ENCODE measurements at regions of chr2 and their contacts with region 1.

Region 1: GRCh38 chr2:64750817-64751285 is 97.1 kb upstream of the SERTAD2 start:
- DNase-seq: peak; percentile 99
- H3K4me3 ChIP-seq: peak overlapping the region; percentile 54 to 92 (median 74)
- H3K27ac ChIP-seq: peak overlapping the region; percentile 92 to 98 (median 96)
- H3K4me1 ChIP-seq: peaks cover 12 to 29% (median 18%) of the 10 kb centered on the region in 4 donors
- H3K27me3 ChIP-seq: no peaks in the 10 kb centered on the region
- CTCF ChIP-seq: no peak
- EP300 ChIP-seq: no peak
- POLR2A ChIP-seq: peak; percentile 99

Region 2: GRCh38 chr2:64653349-64654062 is 97.3 kb before region 1 on chr2 and contains the start of gene SERTAD2:
- in situ Hi-C with region 1: loop called in 2 of 4 experiments (anchors 5 to 10 kb)
- intact Hi-C with region 1: loop called (anchors 5 kb)
- DNase-seq: peak; percentile 91
- H3K4me3 ChIP-seq: peak within 1 kb of the TSS; percentile 78 to 99 (median 90)
- H3K27ac ChIP-seq: peak within 1 kb of the TSS; percentile 98 to 100 (median 100)
- H3K4me1 ChIP-seq: peaks cover 33 to 51% (median 48%) of the 10 kb centered on the region in 4 donors
- H3K27me3 ChIP-seq: no peaks in the 10 kb centered on the region
- CTCF ChIP-seq: peak in 1 of 5 experiments; percentile 2
- EP300 ChIP-seq: no peak
- POLR2A ChIP-seq: peak; percentile 97
- total RNA-seq, gene SERTAD2: 5.4 to 22.1 (median 13.2) TPM

Region 3: DNA sequence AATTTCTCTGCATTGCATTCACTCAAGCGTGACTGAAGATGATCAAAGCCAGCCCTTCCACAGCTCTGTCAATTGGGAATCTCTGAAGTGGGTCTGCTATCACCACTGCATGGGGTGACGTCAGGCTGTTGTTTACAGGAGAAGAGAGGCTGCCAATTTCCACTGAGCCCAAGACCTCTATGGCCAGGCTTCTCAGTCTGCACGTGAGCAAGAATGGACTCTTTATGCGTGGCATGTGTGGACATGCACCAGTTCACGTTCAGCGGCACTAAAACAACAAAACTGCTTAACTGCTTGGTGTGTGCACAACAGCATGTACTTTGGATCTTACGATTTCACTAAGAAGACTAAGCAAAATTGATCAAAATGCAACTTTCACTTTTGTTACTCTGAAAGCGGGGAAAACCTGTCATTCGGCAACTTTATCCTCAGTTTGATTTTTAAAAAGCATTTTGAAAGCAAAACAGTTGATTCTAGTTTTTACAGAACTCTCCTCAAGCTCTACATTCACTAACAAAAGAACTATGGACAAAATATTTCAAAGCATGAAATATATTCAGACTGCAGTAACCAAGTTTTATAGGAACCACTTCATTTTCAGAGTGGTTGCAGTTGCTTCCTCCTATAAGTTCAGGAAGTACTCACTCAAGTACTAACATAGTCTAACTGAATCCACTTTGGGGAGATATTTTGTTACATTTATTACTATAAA is 20.1 kb before region 1 on chr2:
- in situ Hi-C with region 1: no loop called
- intact Hi-C with region 1: no loop called
- DNase-seq: peak; percentile 67
- H3K4me3 ChIP-seq: peak overlapping the region in 3 of 4 donors; percentile 19 to 40 (median 26)
- H3K27ac ChIP-seq: peak overlapping the region; percentile 75 to 86 (median 81)
- H3K4me1 ChIP-seq: peaks cover 14 to 56% (median 29%) of the 10 kb centered on the region in 4 donors
- H3K27me3 ChIP-seq: no peaks in the 10 kb centered on the region
- CTCF ChIP-seq: no peak
- EP300 ChIP-seq: no peak
- POLR2A ChIP-seq: peak; percentile 29

Region 4: GRCh38 chr2:64812285-64812684 is 61.4 kb after region 1 on chr2:
- in situ Hi-C with region 1: no loop called
- intact Hi-C with region 1: loop called (anchors 2 kb)
- DNase-seq: no peak
- H3K4me3 ChIP-seq: no peak overlapping the region
- H3K27ac ChIP-seq: no peak overlapping the region
- H3K4me1 ChIP-seq: no peaks in the 10 kb centered on the region
- H3K27me3 ChIP-seq: no peaks in the 10 kb centered on the region
- CTCF ChIP-seq: no peak
- EP300 ChIP-seq: no peak
- POLR2A ChIP-seq: no peak

Region 5: GRCh38 chr2:64839844-64840243 is 89.0 kb after region 1 on chr2:
- in situ Hi-C with region 1: loop called in 1 of 4 experiments (anchors 10 kb)
- intact Hi-C with region 1: no loop called
- DNase-seq: peak; percentile 21
- H3K4me3 ChIP-seq: no peak overlapping the region
- H3K27ac ChIP-seq: peak overlapping the region; percentile 3 to 77 (median 31)
- H3K4me1 ChIP-seq: peaks cover 9 to 33% (median 14%) of the 10 kb centered on the region in 4 donors
- H3K27me3 ChIP-seq: no peaks in the 10 kb centered on the region
- CTCF ChIP-seq: no peak
- EP300 ChIP-seq: no peak
- POLR2A ChIP-seq: no peak

Region 6: DNA sequence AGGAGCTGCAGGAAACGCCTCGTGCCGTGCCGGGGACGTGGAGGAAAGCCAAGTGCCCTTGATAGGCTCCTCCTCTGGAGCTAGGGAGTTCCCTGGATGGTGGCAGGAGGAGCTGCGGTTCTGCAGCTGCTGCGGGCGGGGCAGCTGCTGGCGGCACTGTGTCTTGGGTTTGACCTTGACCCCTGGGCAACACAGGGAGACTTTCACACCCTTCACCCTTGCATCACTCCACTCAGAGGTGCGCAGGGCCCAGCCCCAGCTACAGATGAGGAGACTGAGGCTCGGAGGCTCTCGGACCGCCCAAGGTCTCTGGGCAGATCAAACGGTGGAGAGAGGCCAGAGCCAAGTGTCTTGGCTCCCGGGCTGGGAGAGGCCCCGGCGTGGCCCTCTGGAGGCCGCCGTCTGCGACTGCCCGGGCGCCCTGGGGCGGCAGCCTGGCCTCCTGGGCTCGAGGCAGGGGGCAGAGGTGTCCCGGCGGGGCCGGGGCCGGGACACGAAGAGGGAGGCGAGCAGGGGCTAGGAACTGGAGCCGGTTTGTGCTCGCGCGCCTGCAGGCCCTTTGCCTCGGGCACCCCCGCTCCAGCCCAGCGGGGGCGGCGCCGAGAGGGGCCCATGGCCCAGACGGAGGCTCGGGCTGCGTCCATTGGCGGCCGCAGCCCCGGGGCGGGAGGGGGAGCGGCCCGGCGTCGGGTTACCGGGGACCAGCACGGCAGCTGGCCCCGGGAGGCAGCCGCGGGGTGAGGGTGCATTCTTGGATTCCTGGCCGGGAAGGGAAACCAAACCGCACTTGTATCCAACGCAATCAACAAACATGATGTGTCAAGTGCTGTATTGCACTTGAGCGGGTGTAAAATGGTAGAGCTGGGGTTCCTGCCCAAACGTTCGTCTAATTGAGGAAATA is 108.7 kb after region 1 on chr2:
- in situ Hi-C with region 1: loop called in 1 of 4 experiments (anchors 10 kb)
- intact Hi-C with region 1: loop called (anchors 5 kb)
- DNase-seq: peak; percentile 94
- H3K4me3 ChIP-seq: peak overlapping the region; percentile 5 to 53 (median 38)
- H3K27ac ChIP-seq: peak overlapping the region; percentile 95 to 97 (median 96)
- H3K4me1 ChIP-seq: peaks cover 22 to 50% (median 37%) of the 10 kb centered on the region in 4 donors
- H3K27me3 ChIP-seq: no peaks in the 10 kb centered on the region
- CTCF ChIP-seq: peak in 2 of 5 experiments; percentile 18 to 40
- EP300 ChIP-seq: no peak
- POLR2A ChIP-seq: peak; percentile 70

Region 7: DNA sequence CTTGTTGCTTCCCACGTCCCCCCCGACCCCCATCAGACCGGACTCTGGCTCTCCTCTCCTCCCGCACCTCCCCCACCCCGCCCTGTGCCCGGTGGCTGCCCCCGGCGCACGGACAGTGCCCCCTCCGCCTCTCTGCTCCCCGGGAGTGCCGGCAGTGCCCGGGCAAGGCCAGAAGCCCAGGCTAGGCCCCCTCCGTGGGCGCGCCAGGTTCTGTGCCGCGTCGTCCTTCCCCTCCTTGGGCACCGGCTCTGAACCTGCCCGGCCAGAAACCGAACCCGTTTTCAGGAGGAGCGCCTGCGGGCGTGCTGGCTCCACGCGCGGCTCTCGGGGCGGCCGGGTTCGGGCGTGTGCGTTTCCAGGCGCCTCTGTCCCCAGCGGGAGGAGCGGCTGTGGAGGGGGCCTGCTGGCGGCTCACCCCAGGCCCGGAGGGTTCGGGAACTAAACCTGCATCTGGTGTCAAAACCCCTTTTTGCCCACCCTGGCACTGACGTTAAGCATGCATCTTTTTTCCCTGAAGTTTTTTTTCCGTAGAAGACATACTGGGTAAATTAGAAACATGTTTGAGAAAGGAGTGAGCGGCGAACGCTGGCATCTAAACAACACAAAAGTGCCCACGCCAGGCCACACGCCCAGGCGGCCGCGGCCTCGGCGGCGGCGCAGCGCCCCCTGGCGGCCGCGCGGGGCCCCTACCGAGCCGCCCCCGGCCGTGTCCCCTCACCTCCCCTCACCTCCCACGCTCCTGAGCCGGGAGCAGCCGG is 114.4 kb after region 1 on chr2:
- in situ Hi-C with region 1: loop called in 1 of 4 experiments (anchors 10 kb)
- intact Hi-C with region 1: loop called (anchors 5 kb)
- DNase-seq: peak; percentile 75
- H3K4me3 ChIP-seq: peak overlapping the region; percentile 28 to 72 (median 58)
- H3K27ac ChIP-seq: peak overlapping the region; percentile 82 to 90 (median 85)
- H3K4me1 ChIP-seq: peaks cover 2 to 28% (median 16%) of the 10 kb centered on the region in 4 donors
- H3K27me3 ChIP-seq: no peaks in the 10 kb centered on the region
- CTCF ChIP-seq: peak in 4 of 5 experiments; percentile 50 to 85 (median 73)
- EP300 ChIP-seq: no peak
- POLR2A ChIP-seq: no peak

Region 8: GRCh38 chr2:64899081-64899865 is 148.4 kb after region 1 on chr2:
- in situ Hi-C with region 1: no loop called
- intact Hi-C with region 1: no loop called
- DNase-seq: no peak
- H3K4me3 ChIP-seq: no peak overlapping the region
- H3K27ac ChIP-seq: no peak overlapping the region
- H3K4me1 ChIP-seq: peaks cover 0 to 4% (median under 1%) of the 10 kb centered on the region in 4 donors
- H3K27me3 ChIP-seq: no peaks in the 10 kb centered on the region
- CTCF ChIP-seq: no peak
- EP300 ChIP-seq: no peak
- POLR2A ChIP-seq: no peak